GM13977 (cell line): ENCODE measurements at regions of chr1 and their contacts with region 1.

Region 1: GRCh38 chr1:175162955-175163354 is 29.6 kb downstream of the KIAA0040 start:
- DNase-seq: no peak
- CTCF ChIP-seq: no peak

Region 2: GRCh38 chr1:175319418-175320230 is 156.7 kb after region 1 on chr1:
- in situ Hi-C with region 1: loop called (anchors 5 kb)
- DNase-seq: peak; percentile 63
- CTCF ChIP-seq: peak; percentile 86

Region 3: GRCh38 chr1:176460544-176461336 is 1297.8 kb after region 1 on chr1:
- in situ Hi-C with region 1: no loop called
- DNase-seq: no peak
- CTCF ChIP-seq: no peak